ENCODE measurements at regions of chr13 and their contacts with region 1.

Region 1: GRCh38 chr13:42271337-42272114 is 426 bp upstream of the AKAP11 start:
- DNase-seq: peak; percentile 78 to 89
- H3K4me3 ChIP-seq: peak overlapping the region; percentile 86
- H3K27ac ChIP-seq: peak overlapping the region; percentile 53
- H3K4me1 ChIP-seq: 0 out of 2 replicates have a peak, but pooled peaks cover 11% of the 10 kb centered on the region
- H3K27me3 ChIP-seq: no peaks in the 10 kb centered on the region
- CTCF ChIP-seq: no peak

Region 2: DNA sequence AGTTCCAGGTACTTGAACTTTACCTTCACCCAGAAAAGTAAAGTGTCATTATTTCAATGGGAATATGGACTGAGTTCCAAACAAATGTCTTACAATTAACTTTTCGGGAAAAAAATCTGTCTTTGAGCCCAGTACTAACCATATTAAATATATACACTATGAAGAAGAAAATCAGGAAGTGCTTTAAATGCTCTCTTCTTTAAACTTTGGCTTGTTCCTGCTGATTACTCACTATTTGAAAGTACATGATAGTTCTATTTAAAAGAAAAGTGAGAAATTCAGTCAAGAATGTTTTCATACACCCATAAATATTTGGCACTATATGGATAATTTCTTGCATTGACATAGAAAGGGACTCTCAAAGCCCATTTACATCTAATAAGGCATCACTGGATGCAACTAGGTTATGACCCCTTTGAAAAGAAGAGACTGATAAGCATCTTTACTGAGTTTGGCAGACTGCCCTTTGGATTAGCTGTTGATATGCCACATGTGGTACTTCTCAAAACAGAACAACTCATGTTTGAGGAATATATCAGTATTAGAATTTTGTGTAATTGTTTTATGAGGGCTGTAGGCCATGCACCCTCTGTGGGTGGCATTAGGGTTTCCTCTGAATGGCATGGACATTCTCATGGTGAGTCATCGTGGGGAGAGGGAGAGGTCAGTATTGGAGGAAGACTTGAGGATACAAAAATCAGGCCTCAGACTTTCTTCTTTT is 285.6 kb before region 1 on chr13:
- CTCF ChIA-PET with region 1: no interaction called
- POLR2A ChIA-PET with region 1: no interaction called
- intact Hi-C with region 1: no loop called
- DNase-seq: peak in 1 of 2 experiments; percentile 41
- H3K4me3 ChIP-seq: no peak overlapping the region
- H3K27ac ChIP-seq: no peak overlapping the region
- H3K4me1 ChIP-seq: no peaks in the 10 kb centered on the region
- H3K27me3 ChIP-seq: no peaks in the 10 kb centered on the region
- CTCF ChIP-seq: no peak

Region 3: DNA sequence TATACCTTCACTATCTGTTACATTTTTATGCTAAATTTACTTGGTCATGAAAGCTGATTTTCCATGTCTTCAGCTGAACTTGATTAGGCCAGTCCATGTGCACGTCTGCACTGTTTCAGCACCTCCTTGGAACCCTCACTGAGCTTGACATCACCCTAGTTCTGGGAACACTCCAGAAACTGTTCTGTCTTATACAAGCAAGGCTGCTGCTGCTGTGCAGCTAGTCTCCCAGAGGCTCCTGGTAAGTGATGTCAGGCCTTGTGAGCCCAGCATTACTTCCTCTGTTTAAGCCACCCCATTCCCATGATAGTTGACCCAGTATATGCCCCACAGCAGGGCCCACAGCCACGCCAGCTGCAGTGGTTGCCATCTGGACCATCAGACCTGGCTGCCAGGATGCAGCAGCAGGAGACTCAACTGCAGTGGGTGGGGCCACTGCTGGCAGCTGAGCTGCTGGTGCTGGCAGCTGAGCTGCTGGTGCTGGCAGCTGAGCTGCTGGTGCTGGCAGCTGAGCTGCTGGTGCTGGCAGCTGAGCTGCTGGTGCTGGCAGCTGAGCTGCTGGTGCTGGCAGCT is 90.1 kb before region 1 on chr13:
- CTCF ChIA-PET with region 1: no interaction called
- POLR2A ChIA-PET with region 1: no interaction called
- intact Hi-C with region 1: loop called (anchors 1 kb)
- DNase-seq: no peak
- H3K4me3 ChIP-seq: no peak overlapping the region
- H3K27ac ChIP-seq: no peak overlapping the region
- H3K4me1 ChIP-seq: no peaks in the 10 kb centered on the region
- H3K27me3 ChIP-seq: no peaks in the 10 kb centered on the region
- CTCF ChIP-seq: no peak